BJ (cell line): ENCODE measurements at regions of chr9 and their contacts with region 1.

Region 1: DNA sequence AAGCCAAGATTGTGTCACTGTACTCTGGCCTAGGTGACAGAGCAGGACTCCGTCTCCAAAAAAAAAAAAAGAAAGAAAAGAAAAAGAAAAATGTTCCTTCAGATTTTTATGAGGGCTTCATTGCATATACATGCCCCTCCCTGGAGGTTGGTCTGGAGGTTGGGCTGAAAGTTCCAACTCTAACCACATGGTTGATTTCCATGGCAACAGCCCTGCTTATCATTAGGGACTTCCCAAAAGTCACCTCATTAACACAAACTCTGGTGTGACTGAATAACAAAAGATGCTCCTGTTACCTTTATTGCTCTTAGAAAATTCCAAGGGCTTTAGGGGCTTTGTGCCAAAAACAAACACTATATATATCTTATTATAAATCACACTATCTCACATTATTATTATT is 113.8 kb downstream of the TMC1 start:
- DNase-seq: no peak
- H3K4me3 ChIP-seq: no peak overlapping the region
- H3K27me3 ChIP-seq: no peaks in the 10 kb centered on the region
- CTCF ChIP-seq: no peak

Region 2: GRCh38 chr9:73151653-73152542 is 516.7 kb after region 1 on chr9 and contains the start of gene ANXA1:
- CTCF ChIA-PET with region 1: no interaction called
- POLR2A ChIA-PET with region 1: interaction called, 32 read pairs
- DNase-seq: peak; percentile 78
- H3K4me3 ChIP-seq: peak within 1 kb of the TSS; percentile 52
- H3K27me3 ChIP-seq: no peaks in the 10 kb centered on the region
- CTCF ChIP-seq: no peak
- polyA plus RNA-seq, gene ANXA1: 581 and 1,031 TPM in 2 replicates